ENCODE measurements at regions of chr16 and their contacts with region 1.

Region 1: GRCh38 chr16:75789237-75789636 is 62.9 kb upstream of the CPHXL start:
- DNase-seq: no peak
- H3K4me3 Mint-ChIP-seq: no peak overlapping the region
- H3K27ac Mint-ChIP-seq: no peak overlapping the region
- H3K4me1 Mint-ChIP-seq: no peaks in the 10 kb centered on the region
- H3K27me3 Mint-ChIP-seq: no peaks in the 10 kb centered on the region

Region 2: DNA sequence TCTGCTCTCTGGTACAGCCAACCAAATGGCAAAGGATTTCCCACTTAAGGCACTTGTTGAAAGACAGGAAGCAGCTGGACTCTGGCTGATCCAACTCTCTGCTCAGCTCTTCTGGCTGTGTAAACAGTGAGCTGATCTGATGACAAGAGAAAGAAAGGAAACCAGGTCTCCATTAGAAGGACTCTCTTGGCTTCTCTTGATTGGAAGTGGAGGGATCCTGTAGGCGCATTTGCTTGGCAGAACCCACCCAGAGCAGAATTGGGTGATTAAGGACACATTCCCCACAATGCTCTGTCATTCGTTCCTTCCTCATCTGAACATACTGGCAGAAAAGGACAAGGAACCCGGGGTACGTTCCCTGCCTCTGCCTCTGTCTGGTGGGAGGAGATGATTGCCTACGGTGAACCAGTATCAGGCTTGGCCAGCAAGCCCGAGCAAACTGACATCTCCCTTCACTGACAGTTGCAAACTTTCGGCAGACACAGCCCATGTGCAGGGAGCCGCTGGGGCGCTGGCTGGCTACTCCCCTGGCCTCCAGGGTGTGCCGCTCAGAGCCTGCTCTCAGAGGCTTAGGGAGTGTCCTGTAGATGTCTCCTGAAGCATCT is 701.8 kb before region 1 on chr16:
- intact Hi-C with region 1: no loop called
- DNase-seq: no peak
- H3K4me3 Mint-ChIP-seq: no peak overlapping the region
- H3K27ac Mint-ChIP-seq: no peak overlapping the region
- H3K4me1 Mint-ChIP-seq: peaks cover 34% of the 10 kb centered on the region
- H3K27me3 Mint-ChIP-seq: no peaks in the 10 kb centered on the region

Region 3: DNA sequence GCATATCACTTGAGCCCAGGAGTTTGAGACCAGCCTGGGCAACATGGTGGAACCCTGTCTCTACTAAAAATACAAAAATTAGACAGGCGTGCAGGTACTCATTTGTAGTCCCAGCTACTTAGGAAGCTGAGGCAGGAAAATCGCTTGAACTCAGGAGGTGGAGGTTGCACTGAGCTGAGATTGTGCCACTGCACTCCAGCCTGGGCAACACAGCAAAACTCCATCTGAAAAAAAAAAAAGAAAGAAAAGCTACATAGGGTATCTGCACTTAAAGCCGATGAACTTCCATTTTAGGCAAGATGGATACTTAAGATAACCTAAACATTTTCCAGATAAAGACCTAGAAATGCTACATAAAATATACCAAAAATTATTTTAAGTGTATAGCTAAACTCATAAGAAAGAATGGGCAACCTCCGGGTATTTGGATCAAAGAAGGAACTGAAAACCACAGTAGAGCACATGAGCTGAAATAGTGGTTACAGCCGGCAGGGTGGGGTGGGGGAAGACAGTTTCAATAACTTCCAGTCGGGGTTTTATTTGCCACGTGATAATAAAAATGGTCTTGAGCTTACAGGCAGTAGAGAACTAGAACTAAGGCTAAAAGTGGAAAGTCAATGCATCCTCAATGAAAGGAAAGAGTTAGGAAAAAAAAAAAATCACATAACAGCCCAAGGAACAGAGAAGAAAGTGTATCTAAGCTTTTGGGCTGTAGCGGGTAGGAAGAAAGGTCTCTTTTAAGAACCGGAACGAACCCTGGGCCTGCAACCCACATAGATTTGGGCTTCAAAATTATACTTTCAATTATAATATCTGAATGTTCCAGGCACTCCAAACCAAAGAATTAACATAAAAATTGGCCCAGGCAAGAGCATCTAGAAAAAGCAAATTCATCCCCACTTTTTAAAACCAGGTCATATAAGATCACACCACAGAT is 409.1 kb before region 1 on chr16:
- intact Hi-C with region 1: no loop called
- DNase-seq: peak; percentile 45
- H3K4me3 Mint-ChIP-seq: peak overlapping the region; percentile 38
- H3K27ac Mint-ChIP-seq: peak overlapping the region; percentile 50
- H3K4me1 Mint-ChIP-seq: peaks cover 38% of the 10 kb centered on the region
- H3K27me3 Mint-ChIP-seq: peaks cover 46% of the 10 kb centered on the region

Region 4: GRCh38 chr16:76653390-76654026 is 864.3 kb after region 1 on chr16:
- intact Hi-C with region 1: loop called (anchors 5 kb)
- DNase-seq: no peak
- H3K4me3 Mint-ChIP-seq: no peak overlapping the region
- H3K27ac Mint-ChIP-seq: no peak overlapping the region
- H3K4me1 Mint-ChIP-seq: no peaks in the 10 kb centered on the region
- H3K27me3 Mint-ChIP-seq: no peaks in the 10 kb centered on the region

Region 5: GRCh38 chr16:77171745-77172635 is 1382.8 kb after region 1 on chr16:
- intact Hi-C with region 1: loop called (anchors 1 kb)
- DNase-seq: no peak
- H3K4me3 Mint-ChIP-seq: no peak overlapping the region
- H3K27ac Mint-ChIP-seq: no peak overlapping the region
- H3K4me1 Mint-ChIP-seq: no peaks in the 10 kb centered on the region
- H3K27me3 Mint-ChIP-seq: peaks cover 9% of the 10 kb centered on the region